Astrocyte of the cerebellum (primary cell): ENCODE measurements at regions of chr6 and their contacts with region 1.

Region 1: GRCh38 chr6:153099636-153100035 is 31.4 kb downstream of the RGS17 start:
- DNase-seq: no peak
- H3K4me3 ChIP-seq: no peak overlapping the region
- CTCF ChIP-seq: no peak

Region 2: DNA sequence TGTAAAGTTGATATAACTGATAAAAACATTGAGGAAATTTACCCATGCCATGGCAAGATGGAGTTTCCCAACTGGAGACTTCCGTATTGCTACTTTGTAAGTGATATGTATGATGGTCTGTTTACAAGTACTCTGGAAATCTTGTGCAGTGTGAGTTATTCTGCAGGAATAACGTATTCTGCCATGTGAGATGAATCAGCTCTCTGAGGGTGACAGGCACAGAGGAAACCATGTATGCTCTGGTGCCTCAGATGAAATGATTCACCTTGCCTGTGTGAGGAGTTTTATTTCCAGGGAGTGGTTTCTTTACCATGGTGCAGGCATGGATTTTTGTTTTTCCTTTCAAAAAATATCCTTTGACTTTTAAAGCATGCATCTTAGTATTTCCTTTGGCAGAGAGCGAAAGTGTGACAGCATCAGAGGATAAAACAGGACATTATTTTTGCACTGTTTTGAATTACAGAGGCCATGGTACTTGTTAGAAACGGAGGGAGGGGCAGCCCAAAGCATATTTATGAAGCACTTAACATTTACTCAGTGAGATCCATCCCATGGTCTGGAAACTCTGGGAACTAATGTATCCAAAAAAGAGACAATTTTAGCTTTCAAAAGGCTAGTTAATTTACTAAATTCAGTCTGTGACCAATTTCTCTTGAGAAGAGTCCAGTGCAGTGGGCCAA is 61.1 kb before region 1 on chr6:
- in situ Hi-C with region 1: loop called (anchors 5 kb)
- DNase-seq: no peak
- H3K4me3 ChIP-seq: no peak overlapping the region
- CTCF ChIP-seq: no peak